CD4-positive, alpha-beta T cell (primary cell): ENCODE measurements at regions of chr1 and their contacts with region 1.

Region 1: GRCh38 chr1:92831762-92832536 is at the start of gene RPL5:
- DNase-seq: peak; percentile 94 to 99 (median 96)
- ATAC-seq: peak; percentile 81
- H3K4me3 ChIP-seq: peak within 1 kb of the TSS; percentile 68
- H3K4me3 Mint-ChIP-seq: peak within 1 kb of the TSS; percentile 96
- H3K27ac ChIP-seq: peak within 1 kb of the TSS; percentile 85 to 92
- H3K27ac Mint-ChIP-seq: peak within 1 kb of the TSS; percentile 97
- H3K4me1 ChIP-seq: peaks cover 31% of the 10 kb centered on the region
- H3K4me1 Mint-ChIP-seq: peaks cover 54% of the 10 kb centered on the region
- H3K27me3 ChIP-seq: no peaks in the 10 kb centered on the region
- H3K27me3 Mint-ChIP-seq: no peaks in the 10 kb centered on the region
- CTCF ChIP-seq: peak; percentile 97
- total RNA-seq, gene RPL5: 1,712 to 1,770 TPM

Region 2: GRCh38 chr1:92080128-92080985 is 751.6 kb before region 1 on chr1 and contains the start of gene BTBD8:
- CTCF ChIA-PET with region 1: no interaction called
- POLR2A ChIA-PET with region 1: no interaction called
- intact Hi-C with region 1: loop called in 1 of 2 experiments (anchors 5 kb)
- DNase-seq: peak; percentile 73 to 92 (median 84)
- ATAC-seq: peak; percentile 95
- H3K4me3 ChIP-seq: peak within 1 kb of the TSS; percentile 69
- H3K4me3 Mint-ChIP-seq: peak within 1 kb of the TSS; percentile 94
- H3K27ac ChIP-seq: peak within 1 kb of the TSS; percentile 23 to 64
- H3K27ac Mint-ChIP-seq: peak within 1 kb of the TSS; percentile 94
- H3K4me1 ChIP-seq: peaks cover 8% of the 10 kb centered on the region
- H3K4me1 Mint-ChIP-seq: peaks cover 25% of the 10 kb centered on the region
- H3K27me3 ChIP-seq: no peaks in the 10 kb centered on the region
- H3K27me3 Mint-ChIP-seq: no peaks in the 10 kb centered on the region
- CTCF ChIP-seq: peak; percentile 22
- total RNA-seq, gene BTBD8: 1.8 to 2.8 TPM

Region 3: DNA sequence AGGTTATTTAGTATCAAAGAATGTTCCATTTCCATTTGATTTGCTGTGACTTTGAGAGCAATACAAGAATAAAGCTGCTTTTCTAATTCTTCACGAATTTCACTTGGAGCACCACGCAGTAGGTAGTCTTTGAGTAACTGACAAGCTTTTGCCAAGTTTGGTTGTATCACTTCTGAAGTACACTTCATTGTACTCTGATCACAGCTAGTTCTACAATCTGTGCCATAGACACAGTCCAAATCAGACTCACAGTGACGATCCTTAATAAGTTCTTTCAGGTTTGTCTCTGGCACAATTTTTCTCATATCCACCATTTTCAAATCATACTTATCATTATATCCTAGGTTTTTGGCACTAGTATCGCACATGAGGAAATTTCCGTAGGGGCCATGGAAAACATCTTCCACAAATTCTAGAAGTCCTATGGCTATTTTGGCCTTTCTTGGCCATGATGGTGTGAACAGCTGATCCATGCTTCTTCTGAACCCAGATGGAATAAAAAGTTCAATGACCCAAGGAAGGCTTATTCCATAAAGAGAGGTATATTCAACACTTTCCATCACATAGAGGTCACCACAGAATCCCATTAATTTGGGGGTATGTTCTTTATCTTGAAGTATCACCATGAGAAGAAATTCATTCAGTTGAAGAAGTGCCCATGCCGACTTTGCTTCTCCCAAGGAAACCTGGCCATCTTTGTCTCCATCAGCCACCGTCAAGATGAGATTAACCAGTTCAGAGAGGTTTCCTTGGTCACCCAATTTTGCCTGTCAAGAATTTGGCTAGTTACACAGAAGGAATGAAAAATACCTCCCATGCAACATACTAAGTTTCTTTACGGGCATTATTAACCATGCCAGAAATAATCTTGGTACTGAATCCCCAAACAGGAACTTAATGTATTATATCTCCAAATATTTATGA is 11.7 kb after region 1 on chr1:
- CTCF ChIA-PET with region 1: interaction called, 9 read pairs
- POLR2A ChIA-PET with region 1: interaction called, 22 read pairs
- intact Hi-C with region 1: no loop called
- DNase-seq: no peak
- ATAC-seq: no peak
- H3K4me3 ChIP-seq: no peak overlapping the region
- H3K4me3 Mint-ChIP-seq: no peak overlapping the region
- H3K27ac ChIP-seq: no peak overlapping the region
- H3K27ac Mint-ChIP-seq: peak overlapping the region; percentile 67
- H3K4me1 ChIP-seq: peaks cover 5% of the 10 kb centered on the region
- H3K4me1 Mint-ChIP-seq: peaks cover 22% of the 10 kb centered on the region
- H3K27me3 ChIP-seq: no peaks in the 10 kb centered on the region
- H3K27me3 Mint-ChIP-seq: no peaks in the 10 kb centered on the region
- CTCF ChIP-seq: no peak

Region 4: GRCh38 chr1:92882819-92883218 is 50.9 kb after region 1 on chr1:
- CTCF ChIA-PET with region 1: interaction called, 3 read pairs
- POLR2A ChIA-PET with region 1: interaction called, 16 read pairs
- intact Hi-C with region 1: no loop called
- DNase-seq: peak in 13 of 14 experiments; percentile 22 to 73 (median 45)
- ATAC-seq: peak; percentile 97
- H3K4me3 ChIP-seq: no peak overlapping the region
- H3K4me3 Mint-ChIP-seq: peak overlapping the region; percentile 27
- H3K27ac ChIP-seq: peak overlapping the region; percentile 33 to 65
- H3K27ac Mint-ChIP-seq: peak overlapping the region; percentile 86
- H3K4me1 ChIP-seq: peaks cover 22% of the 10 kb centered on the region
- H3K4me1 Mint-ChIP-seq: peaks cover 49% of the 10 kb centered on the region
- H3K27me3 ChIP-seq: no peaks in the 10 kb centered on the region
- H3K27me3 Mint-ChIP-seq: no peaks in the 10 kb centered on the region
- CTCF ChIP-seq: no peak

Region 5: GRCh38 chr1:93345633-93346420 is 513.9 kb after region 1 on chr1 and contains the start of gene DR1:
- CTCF ChIA-PET with region 1: interaction called, 5 read pairs
- POLR2A ChIA-PET with region 1: interaction called, 12 read pairs
- intact Hi-C with region 1: loop called in 1 of 2 experiments (anchors 5 kb)
- DNase-seq: peak; percentile 85 to 94 (median 87)
- ATAC-seq: peak; percentile 79
- H3K4me3 ChIP-seq: peak within 1 kb of the TSS; percentile 90
- H3K4me3 Mint-ChIP-seq: peak within 1 kb of the TSS; percentile 99
- H3K27ac ChIP-seq: peak within 1 kb of the TSS; percentile 87 to 94
- H3K27ac Mint-ChIP-seq: peak within 1 kb of the TSS; percentile 96
- H3K4me1 ChIP-seq: peaks cover 9% of the 10 kb centered on the region
- H3K4me1 Mint-ChIP-seq: peaks cover 61% of the 10 kb centered on the region
- H3K27me3 ChIP-seq: no peaks in the 10 kb centered on the region
- H3K27me3 Mint-ChIP-seq: no peaks in the 10 kb centered on the region
- CTCF ChIP-seq: no peak
- total RNA-seq, gene DR1: 51.4 to 54.4 TPM